K562 (cell line): ENCODE measurements at regions of chr3 and their contacts with region 1.

Region 1: GRCh38 chr3:186783073-186783730 is at the start of gene EIF4A2:
- DNase-seq: peak; percentile 88 to 94 (median 92)
- ATAC-seq: peak; percentile 81
- H3K4me3 ChIP-seq: peak within 1 kb of the TSS; percentile 81
- H3K27ac ChIP-seq: peak within 1 kb of the TSS; percentile 99
- H3K4me1 ChIP-seq: peaks cover 4 to 16% of the 10 kb centered on the region in 2 experiments; a peak in 4 of 5 replicates
- H3K27me3 ChIP-seq: no peaks in the 10 kb centered on the region
- CTCF ChIP-seq: 0 out of 6 replicates have a peak, but pooled peaks of 1 of the 3 experiments have one; percentile 4
- EP300 ChIP-seq: peak; percentile 13; the same call in 1 of the 2 replicates
- POLR2A ChIP-seq: peak; percentile 100
- RAD21 ChIP-seq: no peak
- polyA plus RNA-seq, gene EIF4A2: 329 to 333 TPM

Region 2: DNA sequence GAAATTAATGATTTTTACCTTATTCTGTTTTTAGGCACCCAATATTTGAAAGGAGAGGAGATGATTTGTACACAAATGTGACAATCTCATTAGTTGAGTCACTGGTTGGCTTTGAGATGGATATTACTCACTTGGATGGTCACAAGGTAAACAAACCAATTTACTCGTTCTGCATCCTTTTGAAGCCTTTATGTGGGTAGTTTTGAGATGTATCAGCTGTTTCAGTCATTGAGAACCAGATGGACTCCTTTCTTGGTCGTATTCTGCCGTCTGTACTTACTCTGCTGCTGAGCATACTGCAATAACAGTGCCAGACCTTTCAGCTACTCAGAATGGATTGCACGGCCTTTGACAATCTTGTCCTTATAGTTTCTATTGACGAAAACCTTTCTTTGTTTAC is 199.4 kb before region 1 on chr3:
- CTCF ChIA-PET with region 1: no interaction called
- POLR2A ChIA-PET with region 1: interaction called, 23 read pairs
- in situ Hi-C with region 1: no loop called
- intact Hi-C with region 1: no loop called
- DNase-seq: no peak
- ATAC-seq: no peak
- H3K4me3 ChIP-seq: no peak overlapping the region
- H3K27ac ChIP-seq: no peak overlapping the region
- H3K4me1 ChIP-seq: peaks cover 0 to 6% of the 10 kb centered on the region in 2 experiments; a peak in 2 of 5 replicates
- H3K27me3 ChIP-seq: no peaks in the 10 kb centered on the region
- CTCF ChIP-seq: no peak
- EP300 ChIP-seq: no peak
- POLR2A ChIP-seq: no peak
- RAD21 ChIP-seq: no peak

Region 3: GRCh38 chr3:186617038-186617946 is 165.9 kb before region 1 on chr3:
- CTCF ChIA-PET with region 1: no interaction called
- POLR2A ChIA-PET with region 1: interaction called, 41 read pairs
- in situ Hi-C with region 1: no loop called
- intact Hi-C with region 1: no loop called
- DNase-seq: peak; percentile 75 to 85 (median 82)
- ATAC-seq: peak; percentile 98
- H3K4me3 ChIP-seq: peak overlapping the region; percentile 15; the same call in 1 of the 2 replicates
- H3K27ac ChIP-seq: no peak overlapping the region
- H3K4me1 ChIP-seq: peaks cover 3 to 10% of the 10 kb centered on the region in 2 experiments; a peak in 3 of 5 replicates
- H3K27me3 ChIP-seq: peaks cover 10 to 61% of the 10 kb centered on the region in 2 experiments; a peak in 4 of 5 replicates
- CTCF ChIP-seq: peak; percentile 88 to 92 (median 92)
- EP300 ChIP-seq: no peak
- POLR2A ChIP-seq: no peak
- RAD21 ChIP-seq: peak; percentile 87 to 89

Region 4: GRCh38 chr3:186678604-186679003 is 104.6 kb before region 1 on chr3:
- CTCF ChIA-PET with region 1: no interaction called
- POLR2A ChIA-PET with region 1: no interaction called
- in situ Hi-C with region 1: no loop called
- intact Hi-C with region 1: no loop called
- DNase-seq: no peak
- ATAC-seq: no peak
- H3K4me3 ChIP-seq: no peak overlapping the region
- H3K27ac ChIP-seq: no peak overlapping the region
- H3K4me1 ChIP-seq: no peaks in the 10 kb centered on the region; a peak in 1 of 5 replicates
- H3K27me3 ChIP-seq: peaks cover 7 to 43% of the 10 kb centered on the region in 2 experiments
- CTCF ChIP-seq: no peak
- EP300 ChIP-seq: no peak
- POLR2A ChIP-seq: no peak
- RAD21 ChIP-seq: no peak

Region 5: DNA sequence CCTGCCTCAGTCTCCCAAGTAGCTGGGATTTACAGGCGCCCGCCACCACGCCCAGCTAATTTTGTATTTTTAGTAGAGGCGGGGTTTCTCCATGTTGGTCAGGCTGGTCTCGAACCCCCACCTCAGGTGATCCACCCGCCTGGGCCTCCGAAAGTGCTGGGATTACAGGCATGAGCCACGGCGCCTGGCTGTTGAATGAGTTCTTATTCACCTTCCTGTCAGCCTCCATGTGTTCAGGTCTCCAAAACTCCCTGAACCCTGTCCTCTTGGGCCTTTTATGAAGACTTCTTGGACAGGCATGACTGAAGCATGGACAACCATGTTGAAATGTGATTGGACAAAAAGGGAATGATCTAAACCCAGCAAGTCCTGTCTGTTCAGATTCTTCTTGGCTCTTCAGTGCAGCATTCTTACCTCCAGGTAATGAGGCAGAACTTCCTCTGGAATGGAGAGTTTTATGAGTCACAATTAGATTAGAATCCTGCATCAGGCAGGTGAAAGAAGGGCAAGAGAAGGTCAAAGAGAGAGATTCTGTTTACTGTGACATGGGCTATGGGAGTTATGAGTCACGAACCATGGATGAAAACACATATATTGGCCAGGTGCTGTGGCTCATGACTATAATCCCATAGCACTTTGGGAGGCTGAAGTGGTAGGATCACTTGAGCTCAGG is 22.9 kb before region 1 on chr3:
- CTCF ChIA-PET with region 1: no interaction called
- POLR2A ChIA-PET with region 1: interaction called, 10 read pairs
- in situ Hi-C with region 1: no loop called
- intact Hi-C with region 1: no loop called
- DNase-seq: no peak
- ATAC-seq: no peak
- H3K4me3 ChIP-seq: no peak overlapping the region
- H3K27ac ChIP-seq: no peak overlapping the region
- H3K4me1 ChIP-seq: peaks cover 0 to 2% of the 10 kb centered on the region in 2 experiments; a peak in 2 of 5 replicates
- H3K27me3 ChIP-seq: peaks cover 2 to 11% of the 10 kb centered on the region in 2 experiments; a peak in 3 of 5 replicates
- CTCF ChIP-seq: no peak
- EP300 ChIP-seq: no peak
- POLR2A ChIP-seq: no peak
- RAD21 ChIP-seq: no peak

Region 6: DNA sequence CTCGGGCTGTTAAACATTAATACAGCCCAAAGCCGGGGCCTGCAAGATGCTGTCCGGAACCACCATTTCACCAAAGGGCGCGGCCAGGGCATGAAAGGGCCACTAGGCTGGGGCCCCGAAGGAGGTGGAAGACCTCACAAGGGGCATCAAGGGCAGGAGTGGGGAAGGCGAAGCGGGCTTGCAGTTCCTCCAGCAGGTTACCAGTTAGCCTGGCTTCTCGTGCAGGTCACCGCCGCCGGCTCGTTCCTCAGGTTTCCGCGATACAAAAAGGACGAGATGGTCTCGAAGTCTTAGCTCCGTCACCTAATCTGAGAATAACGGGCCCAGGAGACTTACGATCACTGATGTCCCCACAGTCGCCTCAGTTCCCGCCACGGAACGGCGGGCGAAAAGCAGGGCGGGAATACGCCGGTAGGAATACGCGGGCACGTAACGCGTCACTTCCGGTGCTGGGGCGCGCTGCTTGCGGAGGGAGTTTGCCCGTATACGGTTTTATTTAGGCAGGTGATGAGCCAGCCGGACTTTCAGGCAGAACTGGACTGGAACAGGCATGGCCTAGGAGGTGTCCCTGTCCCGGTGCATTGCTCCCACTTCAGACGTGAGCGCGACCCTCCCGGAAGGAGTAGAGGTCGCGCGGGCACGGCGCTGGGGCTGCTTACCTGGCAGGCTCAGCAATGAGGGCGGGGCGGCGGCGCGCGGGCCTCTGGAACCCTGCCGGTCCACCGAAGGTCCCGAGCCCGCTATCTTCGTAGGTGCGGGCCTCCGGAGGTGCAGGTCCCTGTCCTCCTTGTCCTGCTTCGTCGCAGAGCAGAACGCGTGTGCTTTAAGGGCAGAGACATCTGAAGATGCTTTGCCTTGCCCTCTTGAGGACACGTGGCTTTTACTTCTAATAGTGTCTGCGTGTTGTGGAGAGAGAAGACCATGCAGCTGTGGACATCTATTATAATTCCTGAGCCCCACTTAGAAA is 23.2 kb after region 1 on chr3 and contains the start of gene RFC4:
- CTCF ChIA-PET with region 1: no interaction called
- POLR2A ChIA-PET with region 1: interaction called, 13 read pairs
- in situ Hi-C with region 1: no loop called
- intact Hi-C with region 1: no loop called
- DNase-seq: peak; percentile 80 to 93 (median 82)
- ATAC-seq: peak; percentile 94
- H3K4me3 ChIP-seq: peak within 1 kb of the TSS; percentile 77
- H3K27ac ChIP-seq: peak within 1 kb of the TSS; percentile 91
- H3K4me1 ChIP-seq: peaks cover 4 to 17% of the 10 kb centered on the region in 2 experiments
- H3K27me3 ChIP-seq: no peaks in the 10 kb centered on the region
- CTCF ChIP-seq: peak in 1 of 3 experiments; percentile 8; a peak in 1 of 6 replicates
- EP300 ChIP-seq: no peak
- POLR2A ChIP-seq: peak; percentile 93
- RAD21 ChIP-seq: no peak
- polyA plus RNA-seq, gene RFC4: 180 to 227 TPM

Region 7: DNA sequence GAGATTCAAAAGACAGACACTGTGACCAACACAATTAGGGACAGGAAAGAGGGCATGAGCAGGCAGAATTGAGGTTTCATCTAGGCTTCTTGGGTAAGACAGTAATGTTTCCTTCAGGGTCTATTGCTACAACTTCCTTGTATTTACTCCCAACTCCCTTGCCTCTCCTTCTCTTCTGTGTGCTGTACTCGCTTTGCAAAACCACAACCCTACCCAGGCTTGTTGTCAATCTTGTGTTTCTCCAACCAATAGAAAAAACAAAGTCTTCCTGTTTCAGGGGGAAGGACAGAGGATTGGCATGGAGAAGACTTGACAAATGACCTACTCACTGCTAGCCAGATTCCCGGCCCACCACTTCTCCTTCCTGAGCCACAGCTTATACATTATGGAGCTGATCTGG is 544.6 kb after region 1 on chr3:
- CTCF ChIA-PET with region 1: no interaction called
- POLR2A ChIA-PET with region 1: no interaction called
- in situ Hi-C with region 1: no loop called
- intact Hi-C with region 1: no loop called
- DNase-seq: no peak
- ATAC-seq: no peak
- H3K4me3 ChIP-seq: no peak overlapping the region
- H3K27ac ChIP-seq: no peak overlapping the region
- H3K4me1 ChIP-seq: no peaks in the 10 kb centered on the region
- H3K27me3 ChIP-seq: peaks cover 0 to 4% of the 10 kb centered on the region in 2 experiments; a peak in 1 of 5 replicates
- CTCF ChIP-seq: no peak
- EP300 ChIP-seq: no peak
- POLR2A ChIP-seq: no peak
- RAD21 ChIP-seq: no peak